B cell (primary cell): ENCODE measurements at regions of chr6 and their contacts with region 1.

Region 1: GRCh38 chr6:133916650-133917151 is 27.8 kb downstream of the TCF21 start:
- DNase-seq: peak; percentile 71
- ATAC-seq: peak; percentile 69
- H3K4me3 ChIP-seq: no peak overlapping the region
- H3K4me3 Mint-ChIP-seq: peak overlapping the region; percentile 42
- H3K27ac ChIP-seq: no peak overlapping the region
- H3K27ac Mint-ChIP-seq: no peak overlapping the region
- H3K4me1 ChIP-seq: peaks cover 3 to 6% of the 10 kb centered on the region in 2 donors
- H3K4me1 Mint-ChIP-seq: peaks cover 4% of the 10 kb centered on the region
- H3K27me3 ChIP-seq: peaks cover 0 to 7% (median 1%) of the 10 kb centered on the region in 4 experiments
- H3K27me3 Mint-ChIP-seq: peaks cover 21% of the 10 kb centered on the region
- CTCF ChIP-seq: peak; percentile 91

Region 2: GRCh38 chr6:132530293-132530974 is 1386.3 kb before region 1 on chr6:
- CTCF ChIA-PET with region 1: interaction called, 7 read pairs
- POLR2A ChIA-PET with region 1: no interaction called
- intact Hi-C with region 1: loop called (anchors 5 kb)
- DNase-seq: peak; percentile 82
- ATAC-seq: peak; percentile 71
- H3K4me3 ChIP-seq: peak overlapping the region in 4 of 5 experiments; percentile 7 to 54 (median 46)
- H3K4me3 Mint-ChIP-seq: peak overlapping the region; percentile 85
- H3K27ac ChIP-seq: no peak overlapping the region
- H3K27ac Mint-ChIP-seq: peak overlapping the region; percentile 77
- H3K4me1 ChIP-seq: peaks cover 3 to 4% of the 10 kb centered on the region in 2 donors
- H3K4me1 Mint-ChIP-seq: peaks cover 4% of the 10 kb centered on the region
- H3K27me3 ChIP-seq: no peaks in the 10 kb centered on the region
- H3K27me3 Mint-ChIP-seq: no peaks in the 10 kb centered on the region
- CTCF ChIP-seq: peak; percentile 90

Region 3: GRCh38 chr6:132820629-132821381 is 1095.9 kb before region 1 on chr6:
- CTCF ChIA-PET with region 1: interaction called, 4 read pairs
- POLR2A ChIA-PET with region 1: no interaction called
- intact Hi-C with region 1: loop called (anchors 2 kb)
- DNase-seq: peak; percentile 14
- ATAC-seq: no peak
- H3K4me3 ChIP-seq: no peak overlapping the region
- H3K4me3 Mint-ChIP-seq: no peak overlapping the region
- H3K27ac ChIP-seq: peak overlapping the region in 1 of 2 donors; percentile 55
- H3K27ac Mint-ChIP-seq: peak overlapping the region; percentile 50
- H3K4me1 ChIP-seq: peaks cover 14 to 15% of the 10 kb centered on the region in 2 donors
- H3K4me1 Mint-ChIP-seq: peaks cover 37% of the 10 kb centered on the region
- H3K27me3 ChIP-seq: no peaks in the 10 kb centered on the region
- H3K27me3 Mint-ChIP-seq: no peaks in the 10 kb centered on the region
- CTCF ChIP-seq: no peak

Region 4: DNA sequence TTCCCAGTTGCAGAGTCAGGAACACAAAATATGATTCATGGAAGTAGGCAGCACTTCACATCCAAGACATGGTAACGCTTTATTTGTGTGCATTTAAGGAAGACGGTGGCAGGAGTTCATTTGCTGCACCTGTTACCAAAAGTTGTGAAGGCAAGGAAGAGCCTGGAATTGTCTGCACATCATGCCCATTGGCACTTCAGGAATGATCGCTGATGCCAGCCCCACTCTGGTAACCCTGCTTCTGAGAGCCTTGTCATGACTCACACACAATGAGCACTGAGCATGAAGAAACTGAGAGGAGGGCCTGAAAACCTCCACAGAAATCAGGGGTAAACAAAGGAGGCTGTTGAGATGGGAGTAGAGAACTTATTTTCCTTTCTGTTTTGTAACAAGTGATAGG is 921.3 kb before region 1 on chr6:
- CTCF ChIA-PET with region 1: no interaction called
- POLR2A ChIA-PET with region 1: no interaction called
- intact Hi-C with region 1: no loop called
- DNase-seq: no peak
- ATAC-seq: no peak
- H3K4me3 ChIP-seq: no peak overlapping the region
- H3K4me3 Mint-ChIP-seq: no peak overlapping the region
- H3K27ac ChIP-seq: no peak overlapping the region
- H3K27ac Mint-ChIP-seq: no peak overlapping the region
- H3K4me1 ChIP-seq: no peaks in the 10 kb centered on the region
- H3K4me1 Mint-ChIP-seq: no peaks in the 10 kb centered on the region
- H3K27me3 ChIP-seq: no peaks in the 10 kb centered on the region
- H3K27me3 Mint-ChIP-seq: peaks cover 15% of the 10 kb centered on the region
- CTCF ChIP-seq: no peak

Region 5: DNA sequence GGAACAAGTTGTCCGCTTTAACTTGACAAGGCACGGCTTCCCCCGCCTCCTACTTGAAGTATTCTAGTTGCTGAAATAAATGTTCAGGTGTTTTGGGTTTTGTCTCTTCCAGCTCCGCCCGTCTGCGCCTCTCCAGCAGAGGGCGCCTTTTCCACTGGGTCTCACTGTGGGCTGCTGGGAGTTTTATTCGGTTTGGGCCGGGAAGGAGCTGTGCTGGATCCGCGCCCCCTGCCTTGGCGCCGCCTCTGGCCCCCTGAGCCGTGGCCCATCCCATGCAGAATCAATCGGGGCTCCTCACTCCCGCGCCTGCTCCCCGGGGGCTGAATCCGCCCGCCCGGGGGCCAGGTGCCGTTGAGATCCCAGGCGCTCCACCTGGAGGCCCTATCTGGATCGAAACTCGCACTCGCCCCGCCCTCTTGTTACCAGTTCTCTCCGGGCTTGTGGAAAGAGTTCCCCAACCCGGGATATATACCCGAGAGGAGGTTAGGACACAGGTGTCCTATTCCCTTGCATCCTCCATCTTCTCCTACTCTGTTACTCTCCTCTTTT is 78.8 kb before region 1 on chr6:
- CTCF ChIA-PET with region 1: interaction called, 9 read pairs
- POLR2A ChIA-PET with region 1: no interaction called
- intact Hi-C with region 1: loop called (anchors 1 kb)
- DNase-seq: peak; percentile 59
- ATAC-seq: peak; percentile 49
- H3K4me3 ChIP-seq: peak overlapping the region in 3 of 5 experiments; percentile 23 to 44 (median 29)
- H3K4me3 Mint-ChIP-seq: peak overlapping the region; percentile 62
- H3K27ac ChIP-seq: no peak overlapping the region
- H3K27ac Mint-ChIP-seq: no peak overlapping the region
- H3K4me1 ChIP-seq: peaks cover 7 to 8% of the 10 kb centered on the region in 2 donors
- H3K4me1 Mint-ChIP-seq: peaks cover 7% of the 10 kb centered on the region
- H3K27me3 ChIP-seq: peaks cover 0 to 19% (median 6%) of the 10 kb centered on the region in 4 experiments
- H3K27me3 Mint-ChIP-seq: peaks cover 33% of the 10 kb centered on the region
- CTCF ChIP-seq: peak; percentile 65

Region 6: DNA sequence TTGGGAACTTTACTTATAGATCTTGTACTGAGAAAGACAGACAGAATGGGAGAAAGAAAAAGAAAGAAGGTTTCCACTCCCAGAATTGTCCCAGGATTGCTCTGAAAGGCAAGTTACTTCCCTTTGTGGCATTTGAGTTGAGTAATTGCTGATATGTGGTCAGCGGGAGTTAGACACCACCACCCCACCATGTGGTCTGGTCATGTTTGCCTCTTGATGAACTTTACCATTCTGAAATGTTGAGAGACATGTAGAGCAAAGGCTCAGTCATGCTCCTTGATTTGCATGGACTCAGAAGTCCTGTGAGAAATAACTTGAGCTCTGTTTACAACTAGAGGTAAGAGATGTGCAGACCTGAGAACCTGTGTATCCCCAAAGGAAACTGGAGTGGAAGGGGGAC is 10.7 kb before region 1 on chr6:
- CTCF ChIA-PET with region 1: interaction called, 65 read pairs
- POLR2A ChIA-PET with region 1: no interaction called
- intact Hi-C with region 1: no loop called
- DNase-seq: no peak
- ATAC-seq: no peak
- H3K4me3 ChIP-seq: no peak overlapping the region
- H3K4me3 Mint-ChIP-seq: no peak overlapping the region
- H3K27ac ChIP-seq: no peak overlapping the region
- H3K27ac Mint-ChIP-seq: no peak overlapping the region
- H3K4me1 ChIP-seq: no peaks in the 10 kb centered on the region
- H3K4me1 Mint-ChIP-seq: no peaks in the 10 kb centered on the region
- H3K27me3 ChIP-seq: peaks cover 0 to 37% (median 14%) of the 10 kb centered on the region in 4 experiments
- H3K27me3 Mint-ChIP-seq: peaks cover 55% of the 10 kb centered on the region
- CTCF ChIP-seq: no peak